CD8-positive, alpha-beta T cell (primary cell): ENCODE measurements at regions of chr16 and their contacts with region 1.

Region 1: GRCh38 chr16:23803591-23804123 is 32.1 kb upstream of the PRKCB start:
- DNase-seq: peak; percentile 39 to 83 (median 75)
- ATAC-seq: peak; percentile 92
- H3K4me3 ChIP-seq: no peak overlapping the region
- H3K4me3 Mint-ChIP-seq: no peak overlapping the region
- H3K27ac ChIP-seq: no peak overlapping the region
- H3K27ac Mint-ChIP-seq: no peak overlapping the region
- H3K4me1 ChIP-seq: peaks cover 4% of the 10 kb centered on the region
- H3K4me1 Mint-ChIP-seq: peaks cover 11% of the 10 kb centered on the region
- H3K27me3 ChIP-seq: no peaks in the 10 kb centered on the region
- H3K27me3 Mint-ChIP-seq: no peaks in the 10 kb centered on the region
- CTCF ChIP-seq: peak; percentile 77

Region 2: DNA sequence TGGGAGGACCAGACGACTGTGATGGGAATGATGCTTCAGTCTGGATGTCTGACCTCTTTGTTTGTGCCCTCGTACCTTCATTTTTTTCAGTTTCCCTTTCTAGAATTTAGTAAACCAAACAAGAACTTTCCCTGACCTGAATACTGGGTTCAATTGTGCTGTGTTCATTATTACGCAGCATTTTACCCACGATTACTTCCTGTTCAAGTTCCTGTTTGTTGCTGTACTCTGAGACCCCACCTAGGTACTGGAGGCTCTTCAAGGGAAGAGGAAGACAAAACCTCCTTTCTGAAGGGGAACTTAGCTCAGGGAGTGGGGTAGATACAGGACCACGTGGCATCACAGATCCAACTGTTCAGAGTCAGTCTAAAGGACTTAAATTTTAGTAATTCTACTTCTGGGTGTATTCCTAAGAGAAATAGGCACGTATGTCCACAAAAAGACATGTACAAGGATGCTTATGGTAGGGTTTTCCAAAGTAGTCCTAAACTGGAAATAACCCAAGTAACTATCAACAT is 22.9 kb after region 1 on chr16:
- CTCF ChIA-PET with region 1: interaction called, 35 read pairs
- POLR2A ChIA-PET with region 1: interaction called, 5 read pairs
- intact Hi-C with region 1: loop called in 1 of 2 experiments (anchors 2 kb)
- DNase-seq: peak in 5 of 9 experiments; percentile 11 to 83 (median 58)
- ATAC-seq: peak; percentile 95
- H3K4me3 ChIP-seq: peak overlapping the region in 1 of 2 experiments; percentile 19
- H3K4me3 Mint-ChIP-seq: peak overlapping the region; percentile 63
- H3K27ac ChIP-seq: peak overlapping the region; percentile 32 to 73
- H3K27ac Mint-ChIP-seq: peak overlapping the region; percentile 93
- H3K4me1 ChIP-seq: peaks cover 25% of the 10 kb centered on the region
- H3K4me1 Mint-ChIP-seq: peaks cover 35% of the 10 kb centered on the region
- H3K27me3 ChIP-seq: no peaks in the 10 kb centered on the region
- H3K27me3 Mint-ChIP-seq: no peaks in the 10 kb centered on the region
- CTCF ChIP-seq: no peak

Region 3: DNA sequence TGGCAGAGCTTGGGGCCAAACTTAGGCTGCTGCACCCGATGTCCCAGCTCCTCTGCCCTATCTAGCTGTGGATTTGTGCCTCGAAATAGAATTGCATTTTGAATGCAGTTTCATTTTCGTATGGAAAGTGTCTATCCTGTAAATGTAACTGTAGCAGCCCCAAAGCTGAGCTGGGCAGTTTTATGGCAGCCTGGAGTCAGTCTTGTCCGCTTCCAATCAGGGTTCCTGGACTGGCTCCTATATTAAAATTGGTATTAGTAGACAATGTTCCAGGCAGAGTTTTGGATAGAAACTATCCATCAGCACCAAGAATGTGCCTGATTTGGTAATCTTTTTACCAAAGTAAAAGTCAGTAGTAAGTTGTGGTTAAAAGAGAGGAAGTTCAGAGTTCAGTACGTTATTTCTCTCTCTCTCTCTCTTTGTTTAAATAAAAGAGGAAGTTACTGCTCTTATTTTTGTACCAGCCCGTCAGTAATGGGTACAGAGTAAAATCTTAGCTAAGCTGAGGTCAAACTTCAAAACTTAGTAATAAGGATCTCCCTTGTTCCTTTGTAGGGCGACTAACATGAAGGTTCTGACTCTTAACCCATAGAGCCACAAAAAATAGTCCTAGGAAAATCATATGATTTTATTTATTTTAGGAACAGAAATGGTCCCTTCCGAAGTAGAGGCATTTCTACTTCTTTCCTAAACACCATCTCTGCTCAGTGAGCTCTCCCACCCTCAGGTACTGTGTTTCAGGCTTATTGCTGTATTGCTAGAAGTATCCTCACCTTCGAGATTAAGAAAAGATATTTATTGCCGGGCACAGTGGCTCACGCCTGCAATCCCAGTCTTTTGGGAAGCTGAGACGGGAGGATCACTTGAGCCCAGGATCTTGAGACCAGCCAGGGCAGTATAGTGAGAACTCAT is 60.1 kb after region 1 on chr16:
- CTCF ChIA-PET with region 1: interaction called, 19 read pairs
- POLR2A ChIA-PET with region 1: interaction called, 6 read pairs
- intact Hi-C with region 1: no loop called
- DNase-seq: peak in 2 of 9 experiments; percentile 38 to 67
- ATAC-seq: peak; percentile 86
- H3K4me3 ChIP-seq: peak overlapping the region; percentile 46 to 56
- H3K4me3 Mint-ChIP-seq: peak overlapping the region; percentile 88
- H3K27ac ChIP-seq: peak overlapping the region; percentile 30 to 70
- H3K27ac Mint-ChIP-seq: peak overlapping the region; percentile 91
- H3K4me1 ChIP-seq: peaks cover 68% of the 10 kb centered on the region
- H3K4me1 Mint-ChIP-seq: peaks cover 86% of the 10 kb centered on the region
- H3K27me3 ChIP-seq: no peaks in the 10 kb centered on the region
- H3K27me3 Mint-ChIP-seq: no peaks in the 10 kb centered on the region
- CTCF ChIP-seq: no peak

Region 4: GRCh38 chr16:23981429-23982399 is 178.1 kb after region 1 on chr16:
- CTCF ChIA-PET with region 1: interaction called, 13 read pairs
- POLR2A ChIA-PET with region 1: no interaction called
- intact Hi-C with region 1: no loop called
- DNase-seq: no peak
- ATAC-seq: no peak
- H3K4me3 ChIP-seq: no peak overlapping the region
- H3K4me3 Mint-ChIP-seq: no peak overlapping the region
- H3K27ac ChIP-seq: no peak overlapping the region
- H3K27ac Mint-ChIP-seq: no peak overlapping the region
- H3K4me1 ChIP-seq: peaks cover 4% of the 10 kb centered on the region
- H3K4me1 Mint-ChIP-seq: peaks cover 27% of the 10 kb centered on the region
- H3K27me3 ChIP-seq: no peaks in the 10 kb centered on the region
- H3K27me3 Mint-ChIP-seq: no peaks in the 10 kb centered on the region
- CTCF ChIP-seq: no peak

Region 5: GRCh38 chr16:24036614-24037013 is 233.0 kb after region 1 on chr16:
- CTCF ChIA-PET with region 1: interaction called, 243 read pairs
- POLR2A ChIA-PET with region 1: interaction called, 3 read pairs
- intact Hi-C with region 1: loop called (anchors 1 kb)
- DNase-seq: peak in 6 of 9 experiments; percentile 14 to 73 (median 46)
- ATAC-seq: peak; percentile 56
- H3K4me3 ChIP-seq: no peak overlapping the region
- H3K4me3 Mint-ChIP-seq: peak overlapping the region; percentile 49
- H3K27ac ChIP-seq: no peak overlapping the region
- H3K27ac Mint-ChIP-seq: no peak overlapping the region
- H3K4me1 ChIP-seq: peaks cover 50% of the 10 kb centered on the region
- H3K4me1 Mint-ChIP-seq: peaks cover 48% of the 10 kb centered on the region
- H3K27me3 ChIP-seq: no peaks in the 10 kb centered on the region
- H3K27me3 Mint-ChIP-seq: no peaks in the 10 kb centered on the region
- CTCF ChIP-seq: peak; percentile 82